Caco-2 (cell line): ENCODE measurements at regions of chr12 and their contacts with region 1.

Region 1: DNA sequence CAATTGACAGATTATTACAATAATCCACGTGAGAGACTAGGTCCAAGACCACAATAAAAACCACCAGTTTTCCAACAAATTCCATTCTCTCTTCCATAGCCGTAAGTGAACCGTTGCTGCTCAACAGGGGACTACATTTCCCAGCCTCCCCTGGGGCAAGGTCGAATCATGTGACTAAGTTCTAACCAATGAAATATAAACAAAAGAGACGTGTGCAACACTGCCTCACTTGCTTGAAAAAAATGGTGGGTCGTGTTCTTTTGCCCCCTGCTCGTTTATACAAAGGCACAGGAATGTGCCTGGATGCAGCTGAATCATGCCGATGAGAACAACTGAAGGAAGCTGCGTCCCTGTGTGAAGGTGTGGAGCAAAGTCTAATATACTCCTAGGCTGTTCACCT is 51.1 kb downstream of the HSPB8 start:
- DNase-seq: peak; percentile 77 to 79
- H3K4me3 ChIP-seq: peak overlapping the region; percentile 34
- H3K4me3 Mint-ChIP-seq: peak overlapping the region; percentile 69
- H3K27ac Mint-ChIP-seq: no peak overlapping the region
- H3K4me1 ChIP-seq: no peaks in the 10 kb centered on the region
- H3K4me1 Mint-ChIP-seq: peaks cover 22% of the 10 kb centered on the region
- H3K27me3 ChIP-seq: no peaks in the 10 kb centered on the region
- H3K27me3 Mint-ChIP-seq: peaks cover 2% of the 10 kb centered on the region
- CTCF ChIP-seq: no peak

Region 2: GRCh38 chr12:119176267-119176849 is 53.5 kb before region 1 on chr12:
- CTCF ChIA-PET with region 1: no interaction called
- POLR2A ChIA-PET with region 1: no interaction called
- intact Hi-C with region 1: loop called (anchors 10 kb)
- DNase-seq: peak; percentile 41 to 74
- H3K4me3 ChIP-seq: no peak overlapping the region
- H3K4me3 Mint-ChIP-seq: peak overlapping the region; percentile 46
- H3K27ac Mint-ChIP-seq: no peak overlapping the region
- H3K4me1 ChIP-seq: peaks cover 54% of the 10 kb centered on the region
- H3K4me1 Mint-ChIP-seq: peaks cover 41% of the 10 kb centered on the region
- H3K27me3 ChIP-seq: no peaks in the 10 kb centered on the region
- H3K27me3 Mint-ChIP-seq: no peaks in the 10 kb centered on the region
- CTCF ChIP-seq: no peak